ENCODE measurements at regions of chr17 and their contacts with region 1.

Region 1: DNA sequence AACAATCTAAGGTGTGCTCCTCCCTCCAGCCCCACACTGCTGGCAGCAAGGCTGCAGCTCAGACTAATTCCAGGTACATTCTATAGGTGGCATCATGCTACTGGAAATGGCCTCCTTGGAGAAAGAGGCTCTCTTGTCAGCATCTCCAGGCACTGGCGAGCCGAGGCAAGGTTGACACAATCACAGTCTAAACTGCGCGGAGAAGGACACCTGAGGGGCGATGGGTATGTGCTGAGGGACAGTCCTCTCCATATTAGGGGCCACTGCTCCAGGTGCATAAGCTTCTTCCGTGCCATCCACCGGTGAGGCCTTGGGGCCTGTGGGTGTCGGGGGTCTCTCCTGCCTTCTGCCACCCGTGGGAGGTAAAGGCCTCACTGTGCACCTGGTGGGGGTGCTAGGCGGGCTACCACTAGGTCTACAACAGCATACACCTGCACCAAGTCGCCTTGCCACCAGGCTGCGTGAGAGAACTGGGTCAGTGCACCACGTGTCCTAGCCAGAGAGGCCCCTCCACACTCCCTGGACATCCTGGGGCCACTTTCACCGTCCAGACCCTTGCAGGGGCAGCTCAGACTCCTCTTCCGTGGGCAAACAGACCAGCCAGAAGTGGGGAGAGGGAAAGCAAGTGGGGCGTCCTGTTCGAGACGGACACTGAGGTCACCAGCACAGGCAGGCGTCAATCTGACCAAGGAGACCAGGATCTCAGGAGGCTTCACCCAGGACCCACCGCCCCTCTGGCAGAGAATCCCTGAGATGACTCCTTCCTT is 12.1 kb upstream of the CBX8 start:
- DNase-seq: no peak
- CTCF ChIP-seq: peak; percentile 34

Region 2: GRCh38 chr17:79589669-79590522 is 219.1 kb before region 1 on chr17:
- in situ Hi-C with region 1: no loop called
- DNase-seq: no peak
- CTCF ChIP-seq: no peak

Region 3: DNA sequence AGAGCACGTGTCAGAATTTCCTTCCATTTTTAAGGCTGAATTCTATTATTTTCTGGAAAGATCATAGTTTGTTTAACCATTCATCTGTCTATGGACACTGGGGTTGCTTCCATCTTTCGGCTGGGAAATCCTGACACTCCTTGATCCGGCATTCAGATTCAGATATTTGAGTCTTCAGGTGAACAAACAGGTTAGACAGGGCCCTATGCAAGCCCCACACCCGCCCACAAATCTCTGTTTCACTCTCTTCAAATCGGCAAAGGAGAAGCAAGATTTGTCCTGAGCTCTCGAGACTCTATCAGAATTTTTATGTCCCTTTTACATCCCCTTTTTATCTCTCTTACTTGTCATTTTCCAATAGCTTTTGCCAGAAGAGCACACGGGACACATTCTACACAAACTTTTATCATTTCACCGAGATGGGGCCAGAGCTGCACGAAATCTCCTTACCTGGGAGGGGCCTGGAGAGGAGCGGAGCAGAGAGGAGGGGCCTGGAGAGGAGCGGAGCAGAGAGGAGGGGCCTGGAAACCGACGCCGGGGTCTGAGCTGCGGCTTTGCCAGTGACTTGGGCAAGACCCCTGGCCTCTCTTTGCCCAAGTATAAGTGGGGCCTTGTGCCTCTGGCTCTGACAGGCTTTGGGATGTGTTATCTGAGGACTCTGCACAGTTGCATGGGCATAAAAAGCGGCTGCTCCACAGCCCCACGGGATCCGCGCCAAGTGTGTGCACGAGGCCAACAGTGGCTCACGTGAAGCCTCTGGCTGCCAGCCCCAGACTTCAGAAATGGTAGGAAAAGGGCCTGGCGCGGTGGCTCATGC is 143.8 kb before region 1 on chr17:
- in situ Hi-C with region 1: no loop called
- DNase-seq: no peak
- CTCF ChIP-seq: no peak

Region 4: DNA sequence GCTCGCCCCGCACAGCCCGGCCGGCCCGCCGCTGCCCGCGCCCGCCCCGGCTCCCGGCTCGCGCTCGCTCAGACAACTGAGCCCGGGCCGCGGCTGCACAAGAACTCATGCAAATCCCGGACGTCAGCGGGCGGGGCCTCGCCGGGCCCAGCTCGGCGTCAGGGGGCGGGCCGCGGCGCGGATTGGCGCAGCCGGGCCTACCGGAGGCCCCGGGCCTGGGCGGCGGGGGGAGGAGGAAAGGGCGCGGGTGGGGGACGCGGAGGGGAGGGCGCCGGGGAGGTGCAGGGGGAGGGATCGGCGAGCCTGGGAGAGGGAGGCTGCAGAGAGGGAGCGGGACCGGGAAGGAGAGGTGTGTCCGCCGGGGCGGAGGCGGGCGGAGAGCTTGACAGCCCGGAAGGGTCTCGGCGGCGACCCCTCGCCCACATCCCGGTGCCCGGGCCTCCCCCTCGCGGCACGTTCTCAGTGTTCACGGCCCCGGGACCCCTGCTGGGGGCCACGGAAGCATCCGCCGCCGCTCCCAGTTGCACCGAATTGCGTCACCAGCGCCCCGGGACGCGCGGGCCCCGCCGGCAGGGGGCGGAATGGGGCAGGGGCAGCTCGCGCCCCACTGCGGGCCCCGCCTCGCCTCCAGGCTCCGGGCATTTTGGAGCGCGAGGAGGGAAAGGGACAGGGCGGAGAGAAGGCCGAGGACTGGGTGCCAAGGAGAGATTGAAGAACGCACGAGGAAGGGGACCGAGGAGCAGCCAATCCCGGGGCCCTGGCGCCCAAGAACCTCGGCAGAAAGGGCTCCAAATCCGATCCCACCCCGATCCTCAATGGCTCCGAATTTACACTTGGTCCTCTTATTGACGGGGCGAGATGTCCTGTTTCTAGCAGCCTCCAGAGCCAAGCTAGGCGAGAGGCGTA is 30.7 kb after region 1 on chr17 and contains the start of gene CBX4:
- in situ Hi-C with region 1: loop called (anchors 5 kb)
- DNase-seq: peak; percentile 97
- CTCF ChIP-seq: peak; percentile 60